K562 (cell line): ENCODE measurements at regions of chr1 and their contacts with region 1.

Region 1: GRCh38 chr1:11946647-11947046 is 12.1 kb downstream of the PLOD1 start:
- DNase-seq: no peak
- ATAC-seq: no peak
- H3K4me3 ChIP-seq: no peak overlapping the region
- H3K27ac ChIP-seq: no peak overlapping the region; the same call in 2 of the 3 replicates
- H3K4me1 ChIP-seq: peaks cover 0 to 10% of the 10 kb centered on the region in 2 experiments; a peak in 3 of 5 replicates
- H3K27me3 ChIP-seq: no peaks in the 10 kb centered on the region
- CTCF ChIP-seq: no peak
- EP300 ChIP-seq: no peak
- POLR2A ChIP-seq: no peak
- RAD21 ChIP-seq: no peak

Region 2: DNA sequence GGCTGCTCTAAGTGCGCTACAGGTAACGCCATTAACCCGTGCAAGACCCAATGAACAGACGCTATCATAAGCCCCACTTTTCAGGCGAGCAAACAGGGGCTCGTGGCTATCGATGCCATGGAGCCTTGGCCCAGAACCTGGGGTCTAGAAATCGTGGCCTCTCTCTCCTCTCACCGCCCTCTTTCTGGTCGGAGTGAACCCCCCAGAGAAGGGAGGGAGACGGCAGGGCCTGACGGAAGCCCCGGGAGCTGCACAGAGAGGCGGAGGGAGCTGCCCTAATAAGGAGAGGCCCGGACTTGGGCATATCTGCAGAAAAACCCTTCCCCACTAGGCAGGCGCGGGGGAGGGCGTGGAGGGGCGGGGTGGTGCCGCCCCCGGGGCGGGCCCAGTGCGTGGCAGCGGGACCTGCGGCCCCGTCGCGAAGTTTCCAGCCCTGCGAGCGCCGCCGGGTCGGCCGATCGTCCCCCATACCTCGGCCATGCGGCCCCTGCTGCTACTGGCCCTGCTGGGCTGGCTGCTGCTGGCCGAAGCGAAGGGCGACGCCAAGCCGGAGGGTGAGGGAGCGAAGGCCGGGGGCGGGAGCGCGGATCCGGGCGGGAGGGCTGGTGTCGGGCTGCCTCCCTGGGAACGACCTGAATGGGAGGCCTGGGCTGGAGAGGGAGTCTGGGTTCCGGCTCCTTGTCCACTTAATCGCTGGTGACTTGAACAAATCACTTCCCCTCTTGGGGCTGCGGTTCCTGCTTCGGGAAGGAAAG is 12.2 kb before region 1 on chr1 and contains the start of gene PLOD1:
- CTCF ChIA-PET with region 1: no interaction called
- POLR2A ChIA-PET with region 1: interaction called, 10 read pairs
- in situ Hi-C with region 1: no loop called
- intact Hi-C with region 1: no loop called
- DNase-seq: peak; percentile 95 to 97 (median 96)
- ATAC-seq: peak; percentile 93
- H3K4me3 ChIP-seq: peak within 1 kb of the TSS; percentile 75
- H3K27ac ChIP-seq: peak within 1 kb of the TSS; percentile 97
- H3K4me1 ChIP-seq: peaks cover 41 to 56% of the 10 kb centered on the region in 2 experiments
- H3K27me3 ChIP-seq: no peaks in the 10 kb centered on the region; a peak in 1 of 5 replicates
- CTCF ChIP-seq: no peak
- EP300 ChIP-seq: no peak
- POLR2A ChIP-seq: peak; percentile 88
- RAD21 ChIP-seq: no peak
- polyA plus RNA-seq, gene PLOD1: 16.6 to 27.1 TPM

Region 3: GRCh38 chr1:12031039-12031980 is 84.7 kb after region 1 on chr1:
- CTCF ChIA-PET with region 1: no interaction called
- POLR2A ChIA-PET with region 1: no interaction called
- in situ Hi-C with region 1: no loop called
- intact Hi-C with region 1: no loop called
- DNase-seq: peak; percentile 70 to 83 (median 80)
- ATAC-seq: peak; percentile 94
- H3K4me3 ChIP-seq: no peak overlapping the region
- H3K27ac ChIP-seq: no peak overlapping the region
- H3K4me1 ChIP-seq: peaks cover 8 to 34% of the 10 kb centered on the region in 2 experiments; a peak in 4 of 5 replicates
- H3K27me3 ChIP-seq: no peaks in the 10 kb centered on the region
- CTCF ChIP-seq: peak; percentile 88 to 91 (median 89)
- EP300 ChIP-seq: no peak
- POLR2A ChIP-seq: no peak
- RAD21 ChIP-seq: peak; percentile 80 to 90